ENCODE measurements at regions of chr3 and their contacts with region 1.

Region 1: GRCh38 chr3:79729096-79729495 is 38.7 kb downstream of the ROBO1 start:
- DNase-seq: no peak
- H3K4me3 ChIP-seq: no peak overlapping the region
- H3K27ac ChIP-seq: no peak overlapping the region
- H3K4me1 ChIP-seq: no peaks in the 10 kb centered on the region
- H3K27me3 ChIP-seq: no peaks in the 10 kb centered on the region
- CTCF ChIP-seq: no peak
- POLR2A ChIP-seq: no peak

Region 2: DNA sequence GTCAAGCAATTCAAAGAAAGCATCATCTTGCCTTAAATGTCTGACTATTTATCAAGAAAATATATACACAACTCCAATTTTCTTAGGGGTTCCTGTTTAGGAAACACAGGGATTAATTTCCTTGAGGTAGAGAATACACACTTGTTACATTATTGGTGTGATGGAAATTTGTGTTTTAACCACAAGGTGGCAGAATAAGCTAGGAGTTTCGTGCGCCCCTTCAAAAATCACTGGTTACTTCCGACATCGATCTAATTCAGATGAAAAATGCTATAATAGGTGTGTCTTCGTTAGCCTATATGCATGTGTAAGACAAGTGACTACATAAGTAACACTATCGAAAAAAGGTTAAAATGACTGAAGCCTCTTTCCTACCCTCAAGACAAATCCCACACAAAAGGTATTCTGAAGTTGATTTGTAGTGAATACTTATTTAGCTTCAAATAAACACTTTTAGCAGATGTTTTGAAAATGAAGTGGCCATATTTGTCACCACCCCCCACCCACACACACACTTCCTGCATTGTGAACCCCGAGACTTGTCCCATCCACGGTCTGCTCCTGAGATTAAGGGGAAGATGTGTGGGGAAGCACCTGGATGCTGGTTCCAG is 207.8 kb before region 1 on chr3:
- intact Hi-C with region 1: loop called (anchors 10 kb)
- DNase-seq: no peak
- H3K4me3 ChIP-seq: no peak overlapping the region
- H3K27ac ChIP-seq: no peak overlapping the region
- H3K4me1 ChIP-seq: no peaks in the 10 kb centered on the region
- H3K27me3 ChIP-seq: peaks cover 0 to 3% (median 0%) of the 10 kb centered on the region in 7 donors
- CTCF ChIP-seq: peak in 8 of 11 experiments; percentile 22 to 60 (median 42)
- POLR2A ChIP-seq: no peak

Region 3: DNA sequence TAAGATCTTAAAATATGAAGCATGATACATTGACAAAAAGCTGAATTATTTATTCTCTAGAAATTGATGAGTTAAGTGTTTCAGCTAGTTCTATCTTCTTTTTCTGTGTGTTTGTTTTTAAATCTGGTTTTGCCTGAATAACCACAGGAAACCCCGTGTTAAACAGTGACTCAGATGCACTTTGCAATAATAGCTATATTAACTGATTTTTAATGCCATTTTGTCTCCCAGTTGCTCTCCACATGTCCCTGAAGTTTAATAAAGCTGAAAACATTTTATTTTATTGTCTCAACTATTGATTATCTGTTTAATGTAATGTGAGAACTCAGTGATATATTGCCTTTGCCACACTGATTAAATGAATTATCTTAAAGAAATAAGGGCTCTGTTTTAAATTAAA is 81.5 kb after region 1 on chr3:
- intact Hi-C with region 1: no loop called
- DNase-seq: no peak
- H3K4me3 ChIP-seq: no peak overlapping the region
- H3K27ac ChIP-seq: no peak overlapping the region
- H3K4me1 ChIP-seq: no peaks in the 10 kb centered on the region
- H3K27me3 ChIP-seq: no peaks in the 10 kb centered on the region
- CTCF ChIP-seq: no peak
- POLR2A ChIP-seq: no peak

Region 4: DNA sequence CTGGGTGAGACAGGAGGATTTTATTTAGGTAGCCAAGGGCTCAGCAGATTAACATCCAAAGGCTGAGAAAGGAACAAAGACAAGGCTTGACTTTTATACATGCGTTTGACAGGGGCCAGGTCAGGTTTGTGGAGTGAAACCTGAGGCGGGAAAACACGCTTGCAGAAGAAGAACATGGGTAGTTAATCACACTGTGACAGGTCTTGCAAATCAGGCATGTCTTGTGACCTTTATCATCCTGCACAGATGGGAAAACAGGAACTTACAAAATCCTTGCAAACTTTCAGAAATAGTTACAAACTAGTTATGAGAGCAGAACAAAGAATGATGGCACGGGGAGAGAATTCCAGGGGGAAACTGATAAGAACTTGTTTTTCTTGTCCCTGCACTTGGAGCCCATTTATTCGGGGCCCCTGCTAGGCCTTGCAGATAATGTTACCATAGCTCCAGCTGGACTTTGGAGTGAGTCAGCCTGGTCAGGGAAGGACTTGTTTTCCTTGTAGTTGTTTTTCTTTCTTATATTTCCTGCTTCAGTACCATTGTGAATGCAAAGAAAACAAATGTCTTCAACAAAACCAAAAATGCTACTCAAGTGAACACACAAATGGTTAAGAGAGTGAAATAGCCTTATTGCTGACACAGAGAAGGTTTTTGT is 1004.6 kb after region 1 on chr3:
- intact Hi-C with region 1: no loop called
- DNase-seq: no peak
- H3K4me3 ChIP-seq: no peak overlapping the region
- H3K27ac ChIP-seq: no peak overlapping the region
- H3K4me1 ChIP-seq: no peaks in the 10 kb centered on the region
- H3K27me3 ChIP-seq: no peaks in the 10 kb centered on the region
- CTCF ChIP-seq: no peak
- POLR2A ChIP-seq: no peak

Measured in spleen (tissue), 13 donors.